ENCODE measurements at regions of chr18 and their contacts with region 1.

Region 1: GRCh38 chr18:11398625-11399024 is 210.8 kb upstream of the SLC35G4 start:
- DNase-seq: no peak
- H3K4me3 Mint-ChIP-seq: no peak overlapping the region
- H3K27ac Mint-ChIP-seq: no peak overlapping the region
- H3K4me1 Mint-ChIP-seq: no peaks in the 10 kb centered on the region
- H3K27me3 Mint-ChIP-seq: peaks cover 66% of the 10 kb centered on the region
- CTCF ChIP-seq: peak; percentile 12

Region 2: DNA sequence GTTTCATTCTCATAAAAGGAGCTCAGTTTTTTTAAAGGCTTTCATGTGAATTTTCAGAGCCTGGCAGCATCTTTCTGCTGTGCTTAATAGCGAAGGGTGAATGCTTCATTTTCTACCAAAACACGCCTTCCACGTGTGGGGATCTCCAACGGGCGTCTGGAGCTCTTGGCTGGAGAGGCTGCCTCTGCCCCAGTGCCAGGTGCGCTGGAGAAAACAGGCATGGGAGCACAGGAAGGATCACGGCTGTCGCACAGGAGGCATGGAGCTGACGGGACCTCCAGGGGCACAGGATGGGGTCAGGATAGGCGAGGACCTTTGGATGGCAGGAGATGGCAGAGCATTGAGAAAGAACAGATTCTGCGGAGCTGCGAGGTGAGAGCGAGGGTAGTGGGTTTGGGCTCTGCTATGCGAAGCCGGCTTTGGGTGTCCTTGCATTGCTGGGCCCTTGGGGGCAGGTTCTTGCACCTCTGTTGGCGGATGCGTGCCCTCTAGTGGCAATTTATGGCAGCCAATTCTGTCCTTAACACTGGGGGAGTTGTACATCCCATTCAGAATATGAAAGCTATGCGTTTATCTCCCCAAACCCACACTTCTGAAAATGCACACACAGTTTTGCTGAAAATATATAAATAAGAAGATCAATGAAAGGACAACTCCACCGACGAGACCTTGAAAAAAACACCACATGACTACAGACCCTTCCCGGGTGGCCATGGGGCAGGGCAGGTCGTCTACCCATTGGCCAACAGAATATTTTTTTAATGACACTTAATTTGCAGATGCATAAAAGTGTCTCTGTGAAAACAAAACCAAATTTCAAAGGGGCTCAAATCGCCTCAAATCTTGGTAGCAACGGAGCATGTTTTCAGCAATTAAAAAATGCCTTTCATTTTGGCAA is 120.4 kb after region 1 on chr18:
- CTCF ChIA-PET with region 1: no interaction called
- intact Hi-C with region 1: loop called (anchors 10 kb)
- DNase-seq: peak; percentile 74
- H3K4me3 Mint-ChIP-seq: no peak overlapping the region
- H3K27ac Mint-ChIP-seq: no peak overlapping the region
- H3K4me1 Mint-ChIP-seq: no peaks in the 10 kb centered on the region
- H3K27me3 Mint-ChIP-seq: peaks cover 34% of the 10 kb centered on the region
- CTCF ChIP-seq: peak; percentile 85

Region 3: DNA sequence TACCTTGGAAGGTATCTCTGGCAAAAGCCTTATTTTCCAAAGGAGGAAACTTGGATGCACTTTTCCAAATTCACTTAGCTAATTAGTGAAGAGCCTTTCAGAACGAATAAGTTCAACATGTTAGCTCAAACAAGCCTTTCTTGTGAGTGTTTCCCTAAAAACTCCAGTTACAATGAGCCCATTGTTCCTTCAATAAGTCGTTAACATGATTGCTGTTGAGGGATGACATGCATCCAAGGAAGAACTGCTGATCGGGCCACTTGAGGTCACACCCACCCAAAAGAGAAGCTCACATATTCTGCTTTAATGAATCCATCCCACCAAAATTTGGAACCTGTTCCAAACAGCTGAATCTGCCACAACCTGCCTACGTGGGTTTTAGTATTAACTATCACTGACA is 162.7 kb after region 1 on chr18:
- CTCF ChIA-PET with region 1: no interaction called
- intact Hi-C with region 1: no loop called
- DNase-seq: no peak
- H3K4me3 Mint-ChIP-seq: no peak overlapping the region
- H3K27ac Mint-ChIP-seq: no peak overlapping the region
- H3K4me1 Mint-ChIP-seq: no peaks in the 10 kb centered on the region
- H3K27me3 Mint-ChIP-seq: peaks cover 83% of the 10 kb centered on the region
- CTCF ChIP-seq: no peak

Measured in Calu3 (cell line).